GM12878 (cell line): ENCODE measurements at regions of chr4 and their contacts with region 1.

Region 1: DNA sequence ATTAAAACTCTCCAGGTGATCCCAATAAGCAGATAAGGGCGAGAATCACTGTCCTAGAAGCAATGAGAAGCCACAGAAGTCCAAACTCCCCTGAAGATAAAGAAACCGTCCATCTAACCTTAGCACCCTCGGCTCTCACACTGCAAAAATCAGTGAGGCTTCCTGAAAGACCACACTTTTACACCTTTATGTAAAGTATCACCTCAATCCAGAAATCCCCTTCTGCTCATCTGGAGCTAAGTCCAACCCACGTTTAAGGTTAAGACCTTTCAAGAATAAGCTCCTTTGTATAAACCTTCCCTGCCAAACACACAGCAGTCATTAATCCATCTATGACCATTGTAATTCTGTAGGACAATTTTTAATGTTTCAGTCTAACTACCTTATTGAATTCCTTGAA is 41.7 kb downstream of the LIN54 start:
- DNase-seq: no peak
- ATAC-seq: peak; percentile 86
- H3K4me3 ChIP-seq: peak overlapping the region; percentile 14; the same call in 1 of the 2 replicates
- H3K27ac ChIP-seq: peak overlapping the region; percentile 42
- H3K4me1 ChIP-seq: peaks cover 13% of the 10 kb centered on the region
- H3K27me3 ChIP-seq: no peaks in the 10 kb centered on the region
- CTCF ChIP-seq: no peak
- EP300 ChIP-seq: no peak
- POLR2A ChIP-seq: no peak
- RAD21 ChIP-seq: no peak

Region 2: GRCh38 chr4:82865592-82865991 is 103.4 kb before region 1 on chr4:
- CTCF ChIA-PET with region 1: no interaction called
- POLR2A ChIA-PET with region 1: no interaction called
- RAD21 ChIA-PET with region 1: no interaction called
- SMC1A ChIA-PET with region 1: no interaction called
- in situ Hi-C with region 1: no loop called
- intact Hi-C with region 1: no loop called
- DNase-seq: no peak
- ATAC-seq: peak; percentile 64
- H3K4me3 ChIP-seq: no peak overlapping the region
- H3K27ac ChIP-seq: no peak overlapping the region
- H3K4me1 ChIP-seq: peaks cover 8% of the 10 kb centered on the region
- H3K27me3 ChIP-seq: no peaks in the 10 kb centered on the region
- CTCF ChIP-seq: no peak
- EP300 ChIP-seq: no peak
- POLR2A ChIP-seq: no peak
- RAD21 ChIP-seq: no peak

Region 3: DNA sequence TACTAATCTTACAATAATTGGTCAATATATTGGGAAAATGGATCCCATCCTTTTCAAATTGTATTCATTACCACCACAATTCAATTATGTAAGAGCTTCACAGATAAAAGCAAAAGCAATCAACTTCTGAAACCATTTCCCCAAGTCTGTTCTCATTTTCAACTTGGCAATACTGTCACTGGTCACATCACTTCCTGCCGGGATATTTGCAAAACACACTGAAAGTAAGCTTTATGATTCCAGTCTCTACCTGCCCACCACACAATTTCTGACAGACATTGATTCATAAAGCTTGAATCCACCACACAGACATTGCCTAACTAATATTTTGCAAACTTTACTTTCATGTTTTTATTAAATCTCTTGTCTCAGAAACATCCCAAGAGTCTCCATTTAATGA is 11.9 kb before region 1 on chr4:
- CTCF ChIA-PET with region 1: interaction called, 12 read pairs
- POLR2A ChIA-PET with region 1: no interaction called
- RAD21 ChIA-PET with region 1: interaction called, 3 read pairs
- SMC1A ChIA-PET with region 1: interaction called, 7 read pairs
- in situ Hi-C with region 1: no loop called
- intact Hi-C with region 1: no loop called
- DNase-seq: no peak
- ATAC-seq: peak; percentile 71
- H3K4me3 ChIP-seq: no peak overlapping the region
- H3K27ac ChIP-seq: no peak overlapping the region; the same call in 1 of the 2 replicates
- H3K4me1 ChIP-seq: peaks cover 5% of the 10 kb centered on the region; the same call in 1 of the 2 replicates
- H3K27me3 ChIP-seq: no peaks in the 10 kb centered on the region
- CTCF ChIP-seq: no peak
- EP300 ChIP-seq: no peak
- POLR2A ChIP-seq: no peak
- RAD21 ChIP-seq: no peak

Region 4: GRCh38 chr4:82981138-82981537 is 12.2 kb after region 1 on chr4:
- CTCF ChIA-PET with region 1: no interaction called
- POLR2A ChIA-PET with region 1: interaction called, 3 read pairs
- RAD21 ChIA-PET with region 1: no interaction called
- SMC1A ChIA-PET with region 1: interaction called, 11 read pairs
- in situ Hi-C with region 1: no loop called
- intact Hi-C with region 1: no loop called
- DNase-seq: no peak
- ATAC-seq: no peak
- H3K4me3 ChIP-seq: no peak overlapping the region
- H3K27ac ChIP-seq: no peak overlapping the region
- H3K4me1 ChIP-seq: no peaks in the 10 kb centered on the region
- H3K27me3 ChIP-seq: no peaks in the 10 kb centered on the region
- CTCF ChIP-seq: no peak
- EP300 ChIP-seq: no peak
- POLR2A ChIP-seq: no peak
- RAD21 ChIP-seq: no peak